ENCODE measurements at regions of chr12 and their contacts with region 1.

Region 1: GRCh38 chr12:57452937-57453509 is 2.1 kb upstream of the INHBE start:
- DNase-seq: peak; percentile 94
- ATAC-seq: peak; percentile 72
- H3K4me3 Mint-ChIP-seq: no peak overlapping the region
- H3K27ac Mint-ChIP-seq: no peak overlapping the region
- H3K4me1 Mint-ChIP-seq: peaks cover 43% of the 10 kb centered on the region
- H3K27me3 Mint-ChIP-seq: no peaks in the 10 kb centered on the region
- CTCF ChIP-seq: peak; percentile 76

Region 2: GRCh38 chr12:57213058-57213715 is 239.8 kb before region 1 on chr12:
- CTCF ChIA-PET with region 1: interaction called, 12 read pairs
- POLR2A ChIA-PET with region 1: interaction called, 12 read pairs
- DNase-seq: peak; percentile 87
- ATAC-seq: peak; percentile 14
- H3K4me3 Mint-ChIP-seq: peak overlapping the region; percentile 53
- H3K27ac Mint-ChIP-seq: peak overlapping the region; percentile 79; the same call in 1 of the 2 replicates
- H3K4me1 Mint-ChIP-seq: peaks cover 35% of the 10 kb centered on the region
- H3K27me3 Mint-ChIP-seq: peaks cover 44% of the 10 kb centered on the region
- CTCF ChIP-seq: peak; percentile 87

Region 3: GRCh38 chr12:57248934-57249742 is 203.9 kb before region 1 on chr12:
- CTCF ChIA-PET with region 1: interaction called, 48 read pairs
- POLR2A ChIA-PET with region 1: interaction called, 4 read pairs
- DNase-seq: peak; percentile 7
- ATAC-seq: peak; percentile 6; the same call in 1 of the 2 replicates
- H3K4me3 Mint-ChIP-seq: no peak overlapping the region
- H3K27ac Mint-ChIP-seq: peak overlapping the region; percentile 11; the same call in 1 of the 2 replicates
- H3K4me1 Mint-ChIP-seq: peaks cover 50% of the 10 kb centered on the region
- H3K27me3 Mint-ChIP-seq: peaks cover 10% of the 10 kb centered on the region
- CTCF ChIP-seq: no peak

Region 4: DNA sequence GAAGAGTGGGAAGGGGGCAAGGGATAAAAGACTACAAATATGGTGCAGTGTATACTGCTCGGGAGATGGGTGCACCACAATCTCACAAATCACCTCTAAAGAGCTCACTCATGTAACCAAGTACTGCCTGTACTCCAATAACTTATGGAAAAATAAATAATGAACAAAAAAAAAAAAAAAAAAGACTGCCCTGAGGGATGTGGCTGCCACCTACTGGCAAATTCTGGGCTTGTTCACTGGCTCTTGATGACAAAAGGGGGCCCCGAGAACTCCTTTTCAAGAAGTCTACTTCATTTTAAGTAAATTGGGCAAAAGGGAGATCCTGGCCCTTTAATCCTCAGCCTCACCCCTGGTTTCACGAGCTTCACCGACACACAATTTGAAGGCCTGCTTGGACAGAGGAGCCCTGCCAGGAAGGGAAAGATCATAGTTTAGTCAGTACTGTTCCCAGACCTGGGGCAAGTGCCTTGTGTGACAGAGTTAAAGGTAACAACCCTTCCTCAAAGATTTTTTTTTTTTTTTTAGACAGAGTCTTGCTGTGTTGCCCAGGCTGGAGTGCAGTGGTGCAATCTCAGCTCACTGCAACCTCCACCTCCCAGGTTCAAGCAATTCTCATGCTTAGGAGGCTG is 176.0 kb before region 1 on chr12:
- CTCF ChIA-PET with region 1: interaction called, 12 read pairs
- POLR2A ChIA-PET with region 1: no interaction called
- DNase-seq: peak; percentile 46
- ATAC-seq: peak; percentile 57
- H3K4me3 Mint-ChIP-seq: no peak overlapping the region
- H3K27ac Mint-ChIP-seq: no peak overlapping the region
- H3K4me1 Mint-ChIP-seq: peaks cover 13% of the 10 kb centered on the region
- H3K27me3 Mint-ChIP-seq: no peaks in the 10 kb centered on the region
- CTCF ChIP-seq: no peak

Region 5: DNA sequence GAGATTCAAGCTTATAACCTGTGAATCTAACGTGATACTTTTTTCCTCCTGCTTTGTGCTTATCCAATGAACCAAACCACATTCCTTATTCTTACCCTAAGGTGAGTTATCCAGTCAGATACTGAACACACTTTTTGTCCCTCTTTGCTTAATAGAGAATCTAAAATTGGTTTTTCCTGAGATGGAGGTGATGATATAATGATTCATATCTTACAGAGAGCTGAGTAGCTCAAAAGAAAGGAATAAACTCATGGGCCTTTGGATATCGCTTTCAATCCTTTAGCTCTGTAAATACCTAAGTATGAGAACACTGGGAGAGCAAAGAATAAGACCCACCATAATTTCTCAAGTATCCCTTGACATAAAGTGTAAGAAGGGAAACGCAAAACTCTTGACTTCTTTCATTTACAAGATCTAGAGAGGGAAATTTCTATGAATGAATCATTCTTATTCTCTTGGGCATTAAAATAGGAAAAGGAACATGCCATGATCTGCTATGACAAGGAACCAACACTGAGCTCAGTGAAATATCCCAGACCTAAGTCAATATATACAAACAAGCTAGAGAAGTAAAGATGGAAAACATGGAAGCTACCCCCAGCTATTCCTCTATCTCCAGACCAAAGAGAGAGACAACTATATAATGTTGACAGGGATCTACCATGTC is 120.2 kb before region 1 on chr12:
- CTCF ChIA-PET with region 1: interaction called, 15 read pairs
- POLR2A ChIA-PET with region 1: interaction called, 7 read pairs
- DNase-seq: no peak
- ATAC-seq: no peak
- H3K4me3 Mint-ChIP-seq: no peak overlapping the region
- H3K27ac Mint-ChIP-seq: peak overlapping the region; percentile 48; the same call in 1 of the 2 replicates
- H3K4me1 Mint-ChIP-seq: no peaks in the 10 kb centered on the region
- H3K27me3 Mint-ChIP-seq: no peaks in the 10 kb centered on the region
- CTCF ChIP-seq: no peak

Region 6: DNA sequence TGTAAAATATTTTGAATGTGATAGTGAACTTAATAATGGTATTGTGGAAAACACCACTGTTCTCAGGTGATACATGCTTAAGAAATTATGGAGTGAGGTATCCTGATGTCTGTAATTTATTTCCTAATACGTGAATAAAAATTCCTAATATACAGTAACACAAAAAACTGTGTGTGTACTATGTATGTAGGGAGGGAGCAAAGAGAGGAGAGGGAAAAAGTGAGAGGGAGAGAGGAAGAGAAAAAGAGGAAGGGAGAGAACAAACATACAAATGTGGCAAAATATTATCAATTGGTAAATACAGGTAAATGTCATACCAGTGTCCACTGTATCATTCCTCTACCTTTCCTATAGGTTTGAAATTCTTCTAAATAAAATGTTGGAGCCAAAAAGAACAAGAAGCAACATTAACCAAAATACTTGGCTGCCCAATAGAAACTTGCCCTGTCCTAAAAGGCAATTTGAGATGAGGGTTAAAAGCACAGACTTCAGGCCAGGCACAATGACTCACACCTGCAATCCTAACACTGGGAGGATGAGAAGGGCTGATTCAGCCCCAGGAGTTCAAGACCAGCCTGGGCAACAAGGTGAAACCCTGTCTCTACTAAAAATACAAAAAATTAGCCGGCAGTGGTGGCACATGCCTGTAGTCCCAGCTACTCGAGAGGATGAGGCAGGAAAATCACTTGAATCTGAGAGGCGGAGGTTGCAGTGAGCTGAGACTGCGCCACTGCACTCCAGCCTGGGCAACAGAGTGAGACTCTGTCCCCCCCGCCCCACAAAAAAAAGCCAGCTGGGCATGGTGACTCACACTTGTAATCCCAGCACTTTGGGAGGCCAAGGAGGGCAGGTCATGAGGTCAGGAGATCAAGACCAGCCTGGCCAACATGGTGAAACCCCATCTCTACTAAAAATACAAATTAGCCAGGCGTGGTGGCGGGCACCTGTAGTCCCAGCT is 36.7 kb before region 1 on chr12:
- CTCF ChIA-PET with region 1: interaction called, 13 read pairs
- POLR2A ChIA-PET with region 1: interaction called, 6 read pairs
- DNase-seq: no peak
- ATAC-seq: no peak
- H3K4me3 Mint-ChIP-seq: no peak overlapping the region
- H3K27ac Mint-ChIP-seq: 0 out of 2 replicates have a peak overlapping the region, but pooled peaks have one; percentile 47
- H3K4me1 Mint-ChIP-seq: peaks cover 12% of the 10 kb centered on the region
- H3K27me3 Mint-ChIP-seq: no peaks in the 10 kb centered on the region
- CTCF ChIP-seq: no peak